ENCODE measurements at regions of chr11 and their contacts with region 1.

Region 1: DNA sequence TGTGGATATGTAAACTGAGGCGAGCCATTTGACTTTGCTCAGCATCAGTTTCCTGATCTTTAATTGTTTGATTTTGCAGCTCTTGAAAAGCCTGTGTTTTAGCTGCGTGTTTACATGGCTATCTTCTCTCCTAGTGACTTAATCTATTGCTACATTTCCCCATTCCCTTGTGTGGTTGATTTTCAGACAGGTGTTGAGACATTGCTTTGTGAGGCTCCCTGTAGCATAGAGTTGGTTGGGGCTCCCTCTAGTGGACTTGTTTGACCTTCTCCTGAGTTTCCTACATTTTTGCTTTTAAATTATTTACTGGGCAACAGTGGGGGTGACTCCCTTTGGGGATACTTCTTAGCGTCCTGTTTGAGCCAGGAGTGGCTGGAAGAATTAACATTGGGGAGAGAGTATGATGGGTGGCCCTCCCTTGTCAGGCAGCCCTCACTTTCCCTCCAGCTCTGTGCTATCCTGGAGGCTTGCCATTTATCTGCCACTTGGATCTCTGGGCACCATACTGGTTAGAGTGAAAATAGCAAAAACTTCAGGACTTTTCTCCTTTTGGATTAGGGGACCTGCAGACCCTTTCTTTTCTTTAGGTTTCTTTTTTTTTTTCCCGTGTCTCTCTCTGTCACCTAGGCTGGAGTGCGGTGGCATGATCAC is 9.2 kb upstream of the CBL start:
- DNase-seq: peak; percentile 52
- H3K4me3 ChIP-seq: no peak overlapping the region
- CTCF ChIP-seq: peak; percentile 69

Region 2: DNA sequence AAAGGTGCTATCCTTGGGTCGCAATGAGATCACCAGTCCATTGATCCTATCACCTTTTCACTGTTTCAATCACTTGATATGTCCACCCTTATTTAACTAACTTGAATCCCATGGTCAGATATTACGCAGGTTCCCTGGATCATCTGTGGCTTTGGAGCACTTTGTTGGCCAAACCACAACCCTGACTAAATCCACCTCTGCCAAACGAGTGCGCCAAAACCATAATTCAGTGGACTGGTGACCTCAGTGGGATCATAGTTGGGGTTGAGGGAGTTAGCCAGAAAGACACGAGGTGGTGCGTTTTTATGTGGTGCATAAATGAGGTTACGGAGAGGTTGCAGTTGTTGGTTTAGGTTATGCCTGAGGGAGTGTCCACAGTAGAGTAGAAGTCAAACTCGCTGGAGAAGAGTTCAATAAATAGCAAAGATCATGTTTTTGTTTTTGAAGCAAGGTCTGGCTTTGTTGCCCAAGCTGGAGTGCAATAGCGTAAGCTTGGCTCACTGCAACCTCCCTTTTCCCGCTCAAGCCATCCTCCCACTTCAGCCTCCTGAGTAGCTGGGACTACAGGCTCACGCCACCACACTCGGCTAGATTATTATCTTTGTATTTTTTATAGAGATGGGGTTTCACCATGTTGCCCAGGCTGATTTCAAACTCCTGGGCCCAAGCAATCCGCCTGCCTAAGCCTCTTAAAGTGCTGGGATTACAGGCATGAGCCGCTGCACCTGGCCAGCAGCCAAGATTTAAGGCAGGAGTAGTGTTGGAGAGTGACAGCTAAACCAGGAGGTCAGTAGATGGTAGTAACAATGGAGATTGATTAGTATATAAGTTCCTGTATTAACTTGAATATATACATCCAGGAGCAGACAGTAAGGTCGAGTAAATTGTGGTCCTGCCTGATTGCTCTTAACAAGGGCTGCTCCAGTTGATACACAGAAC is 220.9 kb before region 1 on chr11:
- CTCF ChIA-PET with region 1: no interaction called
- POLR2A ChIA-PET with region 1: no interaction called
- DNase-seq: no peak
- H3K4me3 ChIP-seq: no peak overlapping the region
- CTCF ChIP-seq: no peak

Region 3: GRCh38 chr11:119057000-119057769 is 139.8 kb before region 1 on chr11 and contains the start of gene HYOU1:
- CTCF ChIA-PET with region 1: interaction called, 15 read pairs
- POLR2A ChIA-PET with region 1: no interaction called
- DNase-seq: peak; percentile 63
- H3K4me3 ChIP-seq: peak within 1 kb of the TSS; percentile 85
- CTCF ChIP-seq: peak; percentile 35

Region 4: DNA sequence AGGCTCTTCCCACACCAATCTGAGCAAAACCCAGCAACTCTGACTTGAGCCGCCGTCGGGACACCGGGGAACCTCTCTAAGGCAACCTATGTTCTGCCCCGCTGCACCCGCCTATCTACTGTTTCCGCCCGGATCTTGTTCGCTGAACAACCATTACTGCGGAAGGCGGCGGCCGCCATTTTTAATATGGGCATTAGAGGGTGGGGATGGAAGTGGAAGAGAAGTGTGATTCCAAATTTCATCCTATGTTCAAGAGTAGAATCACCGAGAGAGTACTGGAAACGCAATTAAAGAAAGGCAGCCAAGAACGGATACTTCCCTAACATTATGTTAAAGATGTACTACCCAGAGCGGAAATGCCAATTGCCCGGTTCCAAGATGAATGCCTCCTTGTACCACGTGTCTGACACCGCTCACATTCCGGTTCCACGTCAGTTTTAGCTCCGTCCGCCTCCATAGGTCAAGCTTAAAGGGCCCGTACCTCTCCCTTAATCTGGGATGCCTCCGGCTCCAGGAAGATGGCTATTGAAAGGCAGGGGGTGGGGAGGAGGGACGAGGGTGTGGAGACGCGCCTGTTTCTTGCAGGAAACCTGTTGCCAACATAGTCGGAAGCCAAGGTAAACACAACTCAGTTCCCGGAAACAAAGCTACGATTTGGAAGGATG is 95.1 kb before region 1 on chr11 and contains the start of gene DPAGT1:
- CTCF ChIA-PET with region 1: interaction called, 27 read pairs
- POLR2A ChIA-PET with region 1: no interaction called
- DNase-seq: peak; percentile 82
- H3K4me3 ChIP-seq: peak within 1 kb of the TSS; percentile 88
- CTCF ChIP-seq: no peak

Region 5: DNA sequence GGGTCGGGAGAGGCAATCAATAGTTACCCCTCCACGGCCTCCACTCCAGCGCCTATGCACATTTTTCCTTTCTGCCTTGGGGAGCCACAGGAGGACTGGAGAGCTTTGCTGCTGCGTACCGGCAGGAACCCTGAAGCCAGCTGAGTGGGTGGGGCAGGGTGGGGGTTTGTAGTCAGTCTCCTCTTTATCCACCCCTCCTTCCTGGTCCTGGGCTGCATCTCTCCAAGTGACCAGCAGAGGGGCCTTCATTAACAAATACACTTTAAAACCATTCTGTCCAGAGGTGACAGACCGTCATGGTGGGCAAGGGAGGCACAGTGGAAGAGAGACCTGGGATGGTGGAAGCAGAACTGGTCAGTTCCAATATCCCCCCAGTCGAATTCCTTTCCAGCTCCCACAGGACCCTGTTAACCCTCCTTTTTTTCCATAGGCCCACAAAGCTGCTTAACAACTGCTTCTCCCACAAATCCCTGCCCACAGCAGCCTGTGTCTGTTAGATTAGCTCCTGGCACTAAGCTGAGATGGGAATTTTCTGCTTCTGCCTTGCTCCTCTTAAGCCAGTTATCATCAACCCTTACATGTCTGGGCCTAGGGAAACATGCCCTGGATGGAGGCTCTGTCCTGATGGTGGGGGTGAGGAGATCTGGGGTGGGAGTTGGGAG is 52.0 kb before region 1 on chr11:
- CTCF ChIA-PET with region 1: interaction called, 55 read pairs
- POLR2A ChIA-PET with region 1: no interaction called
- DNase-seq: no peak
- H3K4me3 ChIP-seq: no peak overlapping the region
- CTCF ChIP-seq: peak; percentile 66

Region 6: DNA sequence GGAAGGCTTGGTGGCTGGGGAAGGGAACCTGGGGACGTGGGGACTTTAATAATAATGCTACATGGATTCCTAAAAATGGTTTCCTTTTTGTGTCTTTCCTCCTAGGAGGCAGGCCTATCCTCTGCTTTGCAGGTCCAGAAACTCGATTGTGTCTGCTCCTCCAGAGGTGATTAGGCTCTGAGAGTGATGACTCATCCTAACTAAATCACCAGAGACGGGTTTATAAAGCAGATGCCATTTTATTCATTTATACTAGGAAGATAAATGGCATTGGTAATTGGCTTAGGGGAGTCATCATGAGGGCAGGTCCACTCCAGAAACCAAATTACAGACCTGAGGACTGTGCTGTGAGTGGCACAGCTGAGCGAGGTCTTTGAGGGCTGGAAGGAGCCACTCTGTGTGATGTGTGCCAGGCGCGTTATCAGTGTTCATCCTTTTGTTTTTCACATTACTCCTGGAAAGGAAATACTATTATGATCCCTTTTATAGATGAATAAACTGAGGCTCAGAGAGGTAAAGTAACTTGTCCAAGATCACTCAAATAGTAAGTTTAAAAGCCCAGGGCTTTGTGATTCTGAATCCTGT is 21.4 kb before region 1 on chr11:
- CTCF ChIA-PET with region 1: interaction called, 52 read pairs
- POLR2A ChIA-PET with region 1: no interaction called
- DNase-seq: no peak
- H3K4me3 ChIP-seq: no peak overlapping the region
- CTCF ChIP-seq: no peak

Region 7: DNA sequence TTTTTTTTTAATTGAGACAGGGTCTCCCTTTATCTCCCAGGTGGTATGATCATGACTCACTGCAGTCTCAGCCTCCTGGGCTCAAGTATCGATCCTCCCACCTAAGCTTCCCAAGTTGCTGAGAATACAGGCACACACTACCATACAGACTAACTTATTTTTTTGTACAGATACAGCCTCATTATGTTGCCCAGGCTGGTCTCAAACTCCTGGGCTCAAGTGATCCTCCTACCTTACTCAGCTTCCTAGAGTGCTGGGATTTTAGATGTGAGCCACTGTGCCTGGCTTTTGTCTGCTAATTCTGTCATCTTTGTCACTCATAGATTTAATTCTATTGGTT is 52.7 kb after region 1 on chr11:
- CTCF ChIA-PET with region 1: no interaction called
- POLR2A ChIA-PET with region 1: no interaction called
- DNase-seq: no peak
- H3K4me3 ChIP-seq: no peak overlapping the region
- CTCF ChIP-seq: no peak

Region 8: DNA sequence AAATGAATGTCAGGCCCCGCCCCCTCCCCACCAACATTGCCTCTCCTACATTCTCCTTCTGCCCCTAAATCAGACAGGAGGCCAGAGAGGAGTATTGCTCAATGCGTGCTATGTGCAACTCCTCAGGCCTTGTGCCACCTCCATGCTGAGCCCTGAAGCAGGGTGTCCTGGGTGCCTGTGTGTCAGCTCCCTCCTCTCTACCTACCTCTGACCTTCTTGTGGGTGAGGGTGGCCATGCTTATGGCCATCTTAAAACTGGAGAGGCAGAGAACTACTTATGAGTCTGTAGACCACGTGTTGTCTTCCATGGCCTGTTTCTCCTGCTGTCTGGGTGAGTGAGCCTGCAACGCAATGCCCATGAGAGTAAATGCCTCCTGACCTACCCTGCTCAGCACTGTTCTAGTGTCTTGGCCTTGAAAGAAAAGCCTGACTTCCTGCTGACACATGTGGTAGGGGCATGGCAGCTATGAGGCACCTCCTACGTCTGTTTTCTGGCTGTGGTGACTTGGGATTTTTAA is 109.5 kb after region 1 on chr11:
- CTCF ChIA-PET with region 1: interaction called, 15 read pairs
- POLR2A ChIA-PET with region 1: no interaction called
- DNase-seq: peak; percentile 44
- H3K4me3 ChIP-seq: no peak overlapping the region
- CTCF ChIP-seq: no peak

Region 9: DNA sequence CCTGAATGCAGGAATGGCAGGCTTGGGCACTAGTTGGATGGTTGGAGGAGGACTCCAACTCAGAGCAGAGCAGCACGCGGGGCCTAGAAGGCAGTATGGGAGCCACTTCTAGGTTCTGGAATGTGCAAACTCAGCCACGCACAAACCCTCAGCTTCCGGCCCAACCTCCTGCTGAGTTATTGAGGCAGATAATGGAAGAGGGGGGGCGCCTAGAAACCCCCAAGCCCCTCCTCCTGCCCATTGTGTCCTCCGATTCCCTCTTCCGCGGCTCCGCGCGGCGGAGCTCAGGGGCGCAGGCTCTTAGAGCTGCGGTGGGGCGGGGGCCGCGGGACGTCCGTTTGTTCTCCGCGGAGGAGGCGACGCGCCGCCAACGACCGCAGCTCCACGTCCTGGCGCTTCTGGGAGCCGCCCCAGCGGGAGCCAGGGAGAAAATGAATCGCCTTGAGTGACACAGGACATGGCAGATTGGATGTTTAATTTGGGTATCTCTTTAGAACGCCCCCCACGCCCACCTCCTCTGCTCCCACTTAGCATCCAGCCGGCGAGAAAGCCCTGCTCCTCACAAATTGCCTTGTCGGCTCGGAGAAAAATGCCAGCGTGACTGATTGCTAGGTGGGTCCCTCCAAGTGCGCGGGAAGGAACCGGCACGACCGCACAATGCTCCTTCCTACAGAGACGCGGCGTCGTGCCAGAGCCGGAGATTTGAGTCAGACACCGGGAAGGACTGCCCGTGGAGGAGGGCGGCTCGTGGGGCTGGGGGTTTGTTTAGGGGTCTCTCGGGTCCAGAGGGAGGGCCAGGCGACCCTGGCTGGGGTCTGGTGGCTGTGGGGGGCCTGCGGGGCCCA is 387.5 kb after region 1 on chr11:
- CTCF ChIA-PET with region 1: no interaction called
- POLR2A ChIA-PET with region 1: no interaction called
- DNase-seq: no peak
- H3K4me3 ChIP-seq: peak overlapping the region; percentile 60
- CTCF ChIP-seq: no peak